ENCODE measurements at regions of chr9 and their contacts with region 1.

Region 1: DNA sequence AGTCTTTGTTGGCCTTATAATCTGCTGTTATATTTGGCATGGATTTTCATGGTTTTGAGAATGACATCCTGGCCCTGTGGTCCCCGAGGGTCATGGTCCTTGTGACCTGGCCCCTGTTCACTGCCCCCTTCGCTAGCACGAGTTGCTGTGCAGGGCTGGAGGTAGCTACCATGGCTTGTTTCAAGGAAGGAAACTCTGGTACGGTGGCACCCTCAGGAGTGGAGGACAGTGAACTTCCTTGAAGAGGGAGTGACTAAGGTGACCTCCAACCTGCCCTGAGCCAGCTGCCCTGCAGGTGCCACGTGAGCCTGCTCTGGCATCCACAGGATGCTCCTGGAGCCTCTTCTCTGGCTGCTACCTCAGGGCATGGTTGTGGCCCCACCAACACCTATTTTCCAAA is 62.1 kb downstream of the MTAP start:
- DNase-seq: no peak
- H3K4me3 ChIP-seq: no peak overlapping the region
- H3K27ac ChIP-seq: no peak overlapping the region
- H3K4me1 ChIP-seq: no peaks in the 10 kb centered on the region
- H3K27me3 ChIP-seq: no peaks in the 10 kb centered on the region
- CTCF ChIP-seq: no peak

Region 2: DNA sequence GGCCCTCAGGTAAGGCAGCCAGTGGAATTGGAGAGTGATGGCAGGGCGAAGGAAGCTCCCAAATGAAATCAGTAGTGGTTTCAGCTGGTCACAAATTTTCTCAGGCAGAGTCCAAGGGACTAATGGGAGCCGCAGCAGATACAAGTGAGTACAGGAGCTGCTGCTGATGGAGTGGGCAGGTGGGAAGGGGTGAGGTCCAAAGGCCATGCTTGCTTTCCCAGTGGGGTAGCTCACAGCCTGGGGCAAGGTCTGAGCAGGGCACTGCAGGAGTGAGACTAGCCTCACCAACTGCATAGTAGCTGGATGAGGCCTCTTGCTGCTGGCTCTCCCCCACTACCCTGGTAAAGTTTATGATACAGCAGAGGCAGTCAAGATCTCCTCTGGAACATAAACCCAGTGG is 23.9 kb before region 1 on chr9:
- intact Hi-C with region 1: loop called (anchors 2 kb)
- DNase-seq: no peak
- H3K4me3 ChIP-seq: no peak overlapping the region
- H3K27ac ChIP-seq: no peak overlapping the region
- H3K4me1 ChIP-seq: no peaks in the 10 kb centered on the region
- H3K27me3 ChIP-seq: no peaks in the 10 kb centered on the region
- CTCF ChIP-seq: no peak